Testis (tissue), 5 donors: ENCODE measurements at regions of chr6 and their contacts with region 1.

Region 1: GRCh38 chr6:25490018-25490801 is 161.8 kb upstream of the SCGN start:
- DNase-seq: peak; percentile 84
- H3K4me3 ChIP-seq: no peak overlapping the region
- H3K27ac ChIP-seq: peak overlapping the region in 1 of 2 donors; percentile 43
- H3K4me1 ChIP-seq: peaks cover 15% of the 10 kb centered on the region
- H3K27me3 ChIP-seq: no peaks in the 10 kb centered on the region
- CTCF ChIP-seq: peak; percentile 61 to 80 (median 64)
- POLR2A ChIP-seq: no peak

Region 2: DNA sequence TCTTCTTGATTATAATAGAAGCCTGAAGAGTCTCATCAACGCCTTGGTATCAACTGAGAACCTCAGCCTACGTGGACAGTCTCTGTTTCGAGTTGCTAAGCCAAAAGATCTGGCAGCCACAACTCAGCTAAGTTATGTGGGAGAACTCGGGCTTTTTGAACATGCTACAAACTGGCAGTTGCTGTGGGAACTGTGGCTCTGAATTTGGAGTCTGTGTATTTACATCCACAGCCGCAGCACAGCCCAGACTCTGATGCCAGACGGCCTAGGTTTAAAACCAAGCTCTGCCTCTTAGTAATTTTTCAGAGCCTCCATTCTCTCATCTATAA is 590.2 kb before region 1 on chr6:
- intact Hi-C with region 1: no loop called
- DNase-seq: no peak
- H3K4me3 ChIP-seq: no peak overlapping the region
- H3K27ac ChIP-seq: no peak overlapping the region
- H3K4me1 ChIP-seq: no peaks in the 10 kb centered on the region
- H3K27me3 ChIP-seq: no peaks in the 10 kb centered on the region
- CTCF ChIP-seq: no peak
- POLR2A ChIP-seq: no peak

Region 3: GRCh38 chr6:25263657-25264056 is 226.6 kb before region 1 on chr6:
- intact Hi-C with region 1: loop called (anchors 10 kb)
- DNase-seq: no peak
- H3K4me3 ChIP-seq: no peak overlapping the region
- H3K27ac ChIP-seq: no peak overlapping the region
- H3K4me1 ChIP-seq: no peaks in the 10 kb centered on the region
- H3K27me3 ChIP-seq: no peaks in the 10 kb centered on the region
- CTCF ChIP-seq: no peak
- POLR2A ChIP-seq: no peak

Region 4: DNA sequence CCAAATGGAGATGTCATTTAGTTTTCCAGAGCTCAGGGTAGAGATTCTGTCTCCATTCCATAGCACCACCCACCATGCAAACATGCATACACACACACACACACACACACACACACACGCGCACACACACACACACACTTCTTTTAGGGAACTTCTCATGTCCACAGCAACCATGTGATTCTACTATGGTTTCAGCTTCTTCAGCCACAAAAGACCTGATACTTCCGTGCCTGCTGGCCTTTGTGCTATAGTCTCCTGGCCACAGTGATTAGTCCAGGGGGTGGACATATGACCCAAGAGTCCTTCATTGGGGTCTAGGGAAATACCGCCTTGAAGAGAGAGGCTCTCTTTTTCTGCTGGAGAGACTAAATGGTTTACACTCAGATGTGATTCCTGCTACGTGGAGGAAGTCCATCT is 157.5 kb before region 1 on chr6:
- intact Hi-C with region 1: no loop called
- DNase-seq: no peak
- H3K4me3 ChIP-seq: no peak overlapping the region
- H3K27ac ChIP-seq: peak overlapping the region in 1 of 2 donors; percentile 17
- H3K4me1 ChIP-seq: peaks cover 39% of the 10 kb centered on the region
- H3K27me3 ChIP-seq: no peaks in the 10 kb centered on the region
- CTCF ChIP-seq: no peak
- POLR2A ChIP-seq: no peak